Pancreas (tissue), 10 donors: ENCODE measurements at regions of chr19 and their contacts with region 1.

Region 1: DNA sequence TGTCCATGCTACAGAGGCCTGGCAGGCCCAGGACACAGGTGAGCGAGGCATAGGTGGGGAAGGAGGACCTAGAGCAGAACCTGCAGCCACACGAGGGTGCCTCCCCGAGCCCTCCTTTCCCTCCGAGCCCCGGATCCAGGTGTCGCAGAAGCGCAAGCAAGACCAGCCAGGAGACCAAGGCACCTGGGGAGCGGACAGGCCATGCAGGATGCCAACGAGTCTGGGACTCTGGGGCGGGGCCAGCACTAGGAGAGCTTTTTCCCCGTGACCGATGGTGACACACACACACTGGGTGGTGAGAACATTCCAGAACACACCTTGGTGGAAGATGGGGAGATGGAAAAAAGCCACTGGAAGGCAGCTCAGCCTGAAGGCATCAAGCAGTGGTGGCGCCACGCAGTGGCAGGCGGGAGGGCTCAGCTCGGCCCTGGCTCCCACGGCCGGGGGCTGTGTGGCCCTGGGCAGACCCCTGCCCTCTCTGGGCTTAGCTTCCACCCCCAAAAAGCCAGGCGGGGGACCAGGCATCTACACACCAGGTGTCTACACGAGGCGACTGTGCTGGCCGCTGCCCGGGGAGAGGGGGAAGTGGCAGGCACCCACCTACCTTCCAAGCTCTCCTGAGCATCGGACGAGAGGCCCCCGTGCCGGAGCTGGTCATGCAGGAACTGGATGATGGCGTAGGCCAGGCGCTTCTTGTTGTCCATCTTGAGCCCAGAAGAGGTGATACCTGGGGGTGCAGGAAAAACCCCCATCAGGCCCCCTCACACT is 14.5 kb downstream of the SGTA start:
- DNase-seq: no peak
- ATAC-seq: no peak
- H3K4me3 ChIP-seq: no peak overlapping the region
- H3K27ac ChIP-seq: no peak overlapping the region
- H3K4me1 ChIP-seq: no peaks in the 10 kb centered on the region
- H3K27me3 ChIP-seq: no peaks in the 10 kb centered on the region
- CTCF ChIP-seq: no peak

Region 2: GRCh38 chr19:2446271-2446779 is 322.2 kb before region 1 on chr19:
- intact Hi-C with region 1: no loop called
- DNase-seq: no peak
- ATAC-seq: no peak
- H3K4me3 ChIP-seq: no peak overlapping the region
- H3K27ac ChIP-seq: no peak overlapping the region
- H3K4me1 ChIP-seq: no peaks in the 10 kb centered on the region
- H3K27me3 ChIP-seq: no peaks in the 10 kb centered on the region
- CTCF ChIP-seq: no peak

Region 3: DNA sequence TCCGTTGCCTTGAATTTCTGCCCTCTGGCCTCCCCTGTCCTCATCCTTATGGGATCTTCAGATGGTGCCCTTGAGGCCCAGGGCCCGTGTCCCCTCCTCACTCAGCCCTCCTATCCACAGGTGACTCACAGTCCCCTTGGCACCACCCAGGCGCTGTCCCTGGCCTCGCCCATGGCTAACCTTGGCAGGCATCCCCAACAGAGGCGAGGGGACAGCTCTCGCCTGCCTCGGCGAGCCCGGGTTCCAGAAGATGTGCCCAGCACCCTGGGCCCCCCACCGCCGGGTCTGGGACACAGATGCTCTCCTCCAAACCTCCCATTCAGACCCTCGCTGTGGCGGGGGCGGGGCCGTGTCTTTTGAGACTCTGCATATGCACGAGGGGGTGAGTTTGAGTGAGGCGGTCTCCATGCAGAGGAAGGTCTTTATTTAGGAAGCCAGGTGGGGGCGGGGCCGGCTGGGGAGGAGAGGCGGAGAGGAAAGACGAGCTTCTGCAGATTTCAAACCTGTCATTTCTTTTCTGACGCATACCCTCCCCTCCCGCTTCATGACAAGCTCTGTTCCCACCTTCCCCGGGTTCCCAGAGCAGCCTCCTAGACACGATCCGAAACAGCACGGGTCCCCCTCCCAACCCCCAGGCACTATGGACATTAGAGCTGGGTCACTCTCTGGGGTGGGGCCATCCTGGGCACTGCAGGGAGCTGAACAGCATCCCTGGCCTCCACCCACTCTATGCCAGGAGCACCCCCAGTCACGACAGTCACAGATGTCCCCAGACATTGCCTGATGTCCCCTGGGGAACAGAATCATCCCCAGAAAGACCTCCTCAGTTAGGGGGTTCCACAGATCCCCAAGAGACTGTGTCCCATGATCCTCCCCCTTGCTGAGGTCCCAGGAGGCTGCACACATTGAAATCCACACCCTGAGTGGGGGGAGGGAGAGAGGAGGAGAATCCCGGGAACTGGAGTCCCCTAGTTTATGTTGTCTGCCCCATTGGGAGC is 114.5 kb before region 1 on chr19:
- intact Hi-C with region 1: loop called in 1 of 3 experiments (anchors 10 kb)
- DNase-seq: peak in 4 of 6 donors; percentile 39 to 77 (median 58)
- ATAC-seq: peak; percentile 67 to 90 (median 71)
- H3K4me3 ChIP-seq: no peak overlapping the region
- H3K27ac ChIP-seq: no peak overlapping the region
- H3K4me1 ChIP-seq: peaks cover 0 to 10% (median 8%) of the 10 kb centered on the region in 3 donors
- H3K27me3 ChIP-seq: no peaks in the 10 kb centered on the region
- CTCF ChIP-seq: no peak